Activated T-helper 2 cell treated with anti-CD3 and anti-CD28 coated beads, Interferon-gamma antibody, Interleukin-2, Interleukin-4, amounts not matched to agents 10 μg/mL and 5 μg/mL and 100 μg/mL, durations not matched to agents 14 hours and 24 hours and 36 hours (primary cell): ENCODE measurements at regions of chr2 and their contacts with region 1.

Region 1: GRCh38 chr2:96407041-96407918 is 71.7 kb downstream of the NCAPH start:
- DNase-seq: peak; percentile 64
- H3K4me3 Mint-ChIP-seq: no peak overlapping the region
- H3K27ac Mint-ChIP-seq: peak overlapping the region; percentile 76
- H3K4me1 Mint-ChIP-seq: peaks cover 17% of the 10 kb centered on the region
- H3K27me3 Mint-ChIP-seq: no peaks in the 10 kb centered on the region

Region 2: GRCh38 chr2:96359310-96359709 is 48.0 kb before region 1 on chr2:
- intact Hi-C with region 1: loop called (anchors 1 kb)
- DNase-seq: no peak
- H3K4me3 Mint-ChIP-seq: no peak overlapping the region
- H3K27ac Mint-ChIP-seq: peak overlapping the region; percentile 55
- H3K4me1 Mint-ChIP-seq: peaks cover 34% of the 10 kb centered on the region
- H3K27me3 Mint-ChIP-seq: no peaks in the 10 kb centered on the region

Region 3: DNA sequence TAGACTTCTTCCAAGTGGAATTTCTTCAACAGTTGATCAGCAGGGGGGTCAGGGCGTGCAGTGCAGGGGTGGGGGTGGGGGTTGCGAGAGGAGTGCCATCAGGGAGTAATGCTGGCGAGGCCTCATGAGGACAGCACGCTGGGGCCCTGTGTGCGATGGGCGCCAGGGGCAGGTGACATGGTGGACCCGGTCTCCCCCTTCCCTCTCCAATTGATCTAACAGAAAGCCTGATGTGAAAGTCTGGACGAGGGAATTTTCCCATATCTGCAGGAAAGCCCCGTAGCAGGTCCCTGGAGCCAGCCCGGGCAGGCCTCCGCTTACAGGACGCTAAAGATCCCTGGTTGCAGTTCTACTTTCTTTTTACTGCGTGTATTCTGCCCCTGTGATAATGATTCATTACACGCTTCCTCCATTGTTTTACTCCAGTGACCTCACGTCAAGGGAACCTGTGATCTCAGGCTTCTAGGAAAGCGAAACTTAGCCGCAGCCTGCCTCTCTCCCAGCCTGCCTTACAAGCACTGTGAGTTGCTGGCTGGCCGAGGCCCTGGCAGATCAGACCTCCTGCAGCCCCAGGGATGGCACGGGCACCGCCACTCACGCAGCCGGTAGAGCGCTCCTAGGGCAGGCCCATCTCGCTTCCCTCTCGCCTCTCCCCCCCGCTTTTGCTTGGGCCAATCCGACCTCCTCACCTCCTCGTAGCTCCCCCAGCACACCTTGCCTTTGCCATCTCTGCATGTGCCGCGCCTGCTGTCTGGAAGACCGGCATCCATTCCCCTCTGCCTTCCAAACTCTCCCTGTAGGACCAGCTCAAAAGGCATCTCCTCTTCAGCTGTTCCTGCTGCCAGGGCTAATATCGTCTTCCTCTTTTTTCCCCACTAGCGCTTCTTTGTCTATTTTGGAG is 78.7 kb after region 1 on chr2:
- intact Hi-C with region 1: loop called (anchors 5 kb)
- DNase-seq: peak; percentile 87
- H3K4me3 Mint-ChIP-seq: peak overlapping the region; percentile 90
- H3K27ac Mint-ChIP-seq: peak overlapping the region; percentile 98
- H3K4me1 Mint-ChIP-seq: peaks cover 47% of the 10 kb centered on the region
- H3K27me3 Mint-ChIP-seq: no peaks in the 10 kb centered on the region

Region 4: DNA sequence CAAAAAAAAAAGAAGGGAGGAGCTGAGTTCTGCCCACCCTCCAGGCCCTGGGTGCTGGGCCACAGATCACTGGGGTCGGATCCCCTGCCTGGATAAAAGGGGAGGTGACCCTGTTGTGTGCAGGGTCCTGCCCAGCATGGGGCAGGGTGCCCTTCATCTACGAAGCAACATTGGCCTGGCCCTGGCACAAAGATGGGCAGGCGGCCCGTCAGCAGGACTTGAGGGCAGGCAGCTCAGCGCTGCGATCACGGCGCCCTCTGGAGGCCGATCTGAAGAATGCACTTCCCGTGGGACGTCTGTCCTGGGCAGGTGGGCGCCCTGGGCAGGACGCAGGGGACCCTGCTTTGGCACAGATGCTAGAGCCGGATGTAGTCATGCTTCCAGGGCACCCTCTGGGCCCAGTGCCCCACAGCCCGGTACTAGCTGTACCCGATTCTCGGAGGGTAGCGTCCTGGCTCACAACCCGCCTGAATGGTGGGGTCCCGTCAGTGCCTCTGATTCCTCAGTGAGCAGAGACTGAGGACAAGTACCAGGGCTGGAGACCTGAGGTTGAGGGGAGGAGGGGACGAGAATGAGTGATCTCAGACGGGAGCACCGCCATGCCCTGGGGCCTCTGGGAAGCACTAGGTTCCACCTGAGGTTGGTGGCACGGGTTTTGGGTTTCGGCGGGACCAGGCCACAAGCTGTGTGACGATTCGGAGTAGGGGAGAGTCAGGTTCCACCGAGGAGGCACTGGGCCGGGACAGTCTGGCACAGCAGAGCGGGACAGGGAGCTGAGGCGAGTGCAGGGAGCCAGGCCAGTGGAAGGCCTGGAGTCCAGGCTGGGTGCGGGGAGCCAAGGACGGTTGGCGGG is 147.2 kb after region 1 on chr2:
- intact Hi-C with region 1: loop called (anchors 1 kb)
- DNase-seq: peak; percentile 58
- H3K4me3 Mint-ChIP-seq: no peak overlapping the region
- H3K27ac Mint-ChIP-seq: no peak overlapping the region
- H3K4me1 Mint-ChIP-seq: peaks cover 19% of the 10 kb centered on the region
- H3K27me3 Mint-ChIP-seq: no peaks in the 10 kb centered on the region